Natural killer cell (primary cell): ENCODE measurements at regions of chr12 and their contacts with region 1.

Region 1: GRCh38 chr12:53213348-53213747 is 6.3 kb upstream of the ITGB7 start:
- DNase-seq: peak; percentile 84 to 90
- ATAC-seq: peak; percentile 59 to 82 (median 71)
- H3K4me3 ChIP-seq: no peak overlapping the region
- H3K4me3 Mint-ChIP-seq: no peak overlapping the region
- H3K27ac ChIP-seq: no peak overlapping the region
- H3K27ac Mint-ChIP-seq: peak overlapping the region; percentile 34 to 38
- H3K4me1 ChIP-seq: peaks cover 63% of the 10 kb centered on the region
- H3K4me1 Mint-ChIP-seq: peaks cover 60 to 78% of the 10 kb centered on the region in 2 donors
- H3K27me3 ChIP-seq: no peaks in the 10 kb centered on the region
- H3K27me3 Mint-ChIP-seq: no peaks in the 10 kb centered on the region
- CTCF ChIP-seq: peak; percentile 91

Region 2: GRCh38 chr12:53180220-53180930 is 33.0 kb before region 1 on chr12 and contains the starts of genes CSAD and ZNF740:
- intact Hi-C with region 1: no loop called
- DNase-seq: peak; percentile 90 to 99
- ATAC-seq: peak; percentile 96 to 100 (median 97)
- H3K4me3 ChIP-seq: peak within 1 kb of the TSS; percentile 74
- H3K4me3 Mint-ChIP-seq: peak within 1 kb of the TSS; percentile 95
- H3K27ac ChIP-seq: peak within 1 kb of the TSS; percentile 91
- H3K27ac Mint-ChIP-seq: peak within 1 kb of the TSS; percentile 93 to 97
- H3K4me1 ChIP-seq: peaks cover 20% of the 10 kb centered on the region
- H3K4me1 Mint-ChIP-seq: peaks cover 34 to 51% of the 10 kb centered on the region in 2 donors
- H3K27me3 ChIP-seq: no peaks in the 10 kb centered on the region
- H3K27me3 Mint-ChIP-seq: no peaks in the 10 kb centered on the region
- CTCF ChIP-seq: no peak
- total RNA-seq, gene CSAD: 50.8 to 54.4 (median 53.0) TPM
- total RNA-seq, gene ZNF740: 37.1 to 65.9 (median 45.3) TPM

Region 3: GRCh38 chr12:53287741-53288216 is 74.4 kb after region 1 on chr12:
- intact Hi-C with region 1: loop called (anchors 1 kb)
- DNase-seq: peak; percentile 62 to 90
- ATAC-seq: peak; percentile 77 to 95 (median 92)
- H3K4me3 ChIP-seq: no peak overlapping the region
- H3K4me3 Mint-ChIP-seq: no peak overlapping the region
- H3K27ac ChIP-seq: no peak overlapping the region
- H3K27ac Mint-ChIP-seq: peak overlapping the region in 1 of 2 donors; percentile 60
- H3K4me1 ChIP-seq: no peaks in the 10 kb centered on the region
- H3K4me1 Mint-ChIP-seq: peaks cover 7 to 8% of the 10 kb centered on the region in 2 donors
- H3K27me3 ChIP-seq: no peaks in the 10 kb centered on the region
- H3K27me3 Mint-ChIP-seq: no peaks in the 10 kb centered on the region
- CTCF ChIP-seq: peak; percentile 62

Region 4: DNA sequence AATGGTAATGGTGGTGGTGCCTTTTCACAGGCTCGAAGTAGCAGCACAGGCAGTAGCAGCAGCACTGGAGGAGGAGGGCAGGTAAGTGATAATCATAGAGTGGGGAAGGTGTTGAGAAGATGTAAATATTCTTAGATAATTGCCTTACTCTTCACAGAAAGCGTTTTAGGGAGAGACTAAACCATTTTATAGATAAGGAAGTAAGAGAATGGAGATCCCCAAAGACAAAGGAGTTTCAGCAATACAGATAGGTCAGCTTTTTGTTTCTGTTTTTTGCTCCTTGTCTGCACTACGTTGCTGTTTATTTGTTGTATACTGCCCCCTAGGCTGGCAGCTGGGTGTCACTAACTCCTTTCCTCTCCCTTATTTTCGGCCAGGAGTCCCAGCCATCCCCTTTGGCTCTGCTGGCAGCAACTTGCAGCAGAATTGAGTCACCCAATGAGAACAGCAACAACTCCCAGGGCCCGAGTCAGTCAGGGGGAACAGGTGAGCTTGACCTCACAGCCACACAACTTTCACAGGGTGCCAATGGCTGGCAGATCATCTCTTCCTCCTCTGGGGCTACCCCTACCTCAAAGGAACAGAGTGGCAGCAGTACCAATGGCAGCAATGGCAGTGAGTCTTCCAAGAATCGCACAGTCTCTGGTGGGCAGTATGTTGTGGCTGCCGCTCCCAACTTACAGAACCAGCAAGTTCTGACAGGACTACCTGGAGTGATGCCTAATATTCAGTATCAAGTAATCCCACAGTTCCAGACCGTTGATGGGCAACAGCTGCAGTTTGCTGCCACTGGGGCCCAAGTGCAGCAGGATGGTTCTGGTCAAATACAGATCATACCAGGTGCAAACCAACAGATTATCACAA is 168.6 kb after region 1 on chr12:
- intact Hi-C with region 1: no loop called
- DNase-seq: peak; percentile 26 to 77
- ATAC-seq: no peak
- H3K4me3 ChIP-seq: no peak overlapping the region
- H3K4me3 Mint-ChIP-seq: peak overlapping the region; percentile 88
- H3K27ac ChIP-seq: peak overlapping the region; percentile 45
- H3K27ac Mint-ChIP-seq: peak overlapping the region in 1 of 2 donors; percentile 81
- H3K4me1 ChIP-seq: peaks cover 49% of the 10 kb centered on the region
- H3K4me1 Mint-ChIP-seq: peaks cover 37 to 43% of the 10 kb centered on the region in 2 donors
- H3K27me3 ChIP-seq: no peaks in the 10 kb centered on the region
- H3K27me3 Mint-ChIP-seq: no peaks in the 10 kb centered on the region
- CTCF ChIP-seq: peak; percentile 45